ENCODE measurements at regions of chr19 and their contacts with region 1.

Region 1: DNA sequence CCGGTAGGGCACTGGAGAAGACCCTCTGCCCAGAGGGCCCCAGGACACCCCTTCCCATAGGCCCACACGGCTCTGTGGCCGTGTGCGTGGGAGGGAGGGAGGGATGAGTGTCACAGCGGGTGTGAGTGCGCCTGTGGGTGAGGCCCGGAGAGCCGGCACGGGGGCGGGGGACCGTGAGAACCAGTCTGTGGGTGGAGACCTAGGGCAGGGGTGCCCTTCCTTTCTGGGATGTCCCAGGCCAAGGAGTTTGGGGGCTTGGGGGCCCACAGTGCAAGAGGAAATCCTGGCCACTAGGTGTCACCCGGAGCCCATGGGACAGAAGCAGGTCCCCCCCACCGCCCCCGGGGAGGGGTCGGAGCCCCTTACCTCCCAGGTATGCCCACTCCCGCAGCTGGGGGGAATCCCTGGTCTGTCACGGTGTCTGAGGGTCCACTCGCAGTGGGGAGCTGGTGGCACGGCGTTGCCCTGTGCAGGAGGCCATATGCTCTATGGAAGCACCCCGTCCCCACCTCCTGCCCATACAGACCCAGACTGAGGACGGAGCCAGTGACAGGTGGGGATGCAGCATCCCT is 16.0 kb upstream of the SLC7A10 start:
- H3K4me3 ChIP-seq: no peak overlapping the region
- H3K27ac ChIP-seq: no peak overlapping the region
- H3K4me1 ChIP-seq: peaks cover 2% of the 10 kb centered on the region; the same call in 1 of the 2 replicates
- CTCF ChIP-seq: peak; percentile 98

Region 2: DNA sequence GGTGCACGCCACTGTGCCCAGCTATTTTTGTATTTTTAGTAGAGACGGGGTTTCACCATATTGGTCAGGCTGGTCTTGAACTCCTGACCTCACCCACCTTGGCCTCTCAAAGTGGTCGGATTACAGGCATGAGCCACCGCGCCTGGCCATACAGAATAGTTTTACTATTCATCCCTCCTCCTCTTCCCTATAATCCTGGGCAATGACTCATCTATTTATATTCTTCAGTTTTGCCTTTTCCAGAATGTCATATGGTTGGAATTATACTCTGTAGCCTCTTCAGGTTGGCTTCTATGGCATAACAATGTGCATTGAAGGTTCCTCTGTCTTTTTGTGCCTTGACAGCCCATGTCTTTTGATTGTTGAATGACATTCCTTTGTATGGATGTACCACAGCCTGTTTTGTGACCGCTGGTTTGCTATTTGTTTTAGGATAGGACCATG is 69.7 kb before region 1 on chr19:
- CTCF ChIA-PET with region 1: no interaction called
- POLR2A ChIA-PET with region 1: no interaction called
- H3K4me3 ChIP-seq: no peak overlapping the region
- H3K27ac ChIP-seq: no peak overlapping the region
- H3K4me1 ChIP-seq: peaks cover 12% of the 10 kb centered on the region
- CTCF ChIP-seq: no peak

Region 3: GRCh38 chr19:33254245-33254824 is 12.7 kb after region 1 on chr19:
- CTCF ChIA-PET with region 1: interaction called, 36 read pairs
- POLR2A ChIA-PET with region 1: no interaction called
- H3K4me3 ChIP-seq: no peak overlapping the region
- H3K27ac ChIP-seq: no peak overlapping the region
- H3K4me1 ChIP-seq: no peaks in the 10 kb centered on the region
- CTCF ChIP-seq: no peak

Region 4: GRCh38 chr19:33302175-33302973 is 60.8 kb after region 1 on chr19 and contains the start of gene CEBPA:
- CTCF ChIA-PET with region 1: interaction called, 28 read pairs
- POLR2A ChIA-PET with region 1: interaction called, 4 read pairs
- H3K4me3 ChIP-seq: peak within 1 kb of the TSS; percentile 48
- H3K27ac ChIP-seq: peak within 1 kb of the TSS; percentile 98
- H3K4me1 ChIP-seq: peaks cover 68% of the 10 kb centered on the region
- CTCF ChIP-seq: peak; percentile 63; the same call in 1 of the 2 replicates

Region 5: GRCh38 chr19:33406521-33407139 is 165.0 kb after region 1 on chr19:
- CTCF ChIA-PET with region 1: interaction called, 292 read pairs
- POLR2A ChIA-PET with region 1: no interaction called
- H3K4me3 ChIP-seq: no peak overlapping the region
- H3K27ac ChIP-seq: no peak overlapping the region
- H3K4me1 ChIP-seq: no peaks in the 10 kb centered on the region
- CTCF ChIP-seq: peak; percentile 99

Region 6: GRCh38 chr19:33771384-33772101 is 529.9 kb after region 1 on chr19:
- CTCF ChIA-PET with region 1: interaction called, 34 read pairs
- POLR2A ChIA-PET with region 1: no interaction called
- H3K4me3 ChIP-seq: no peak overlapping the region
- H3K27ac ChIP-seq: no peak overlapping the region
- H3K4me1 ChIP-seq: no peaks in the 10 kb centered on the region
- CTCF ChIP-seq: peak; percentile 99